Activated T-helper 1 cell treated with anti-CD3 and anti-CD28 coated beads, Interleukin-12 subunit alpha, Interleukin-12 subunit beta, Interleukin-2, Interleukin-4 antibody, amounts not matched to agents 30 ng/mL and 10 ng/mL and 1 ng/mL, durations not matched to agents 14 hours and 24 hours and 36 hours (primary cell): ENCODE measurements at regions of chr11 and their contacts with region 1.

Region 1: DNA sequence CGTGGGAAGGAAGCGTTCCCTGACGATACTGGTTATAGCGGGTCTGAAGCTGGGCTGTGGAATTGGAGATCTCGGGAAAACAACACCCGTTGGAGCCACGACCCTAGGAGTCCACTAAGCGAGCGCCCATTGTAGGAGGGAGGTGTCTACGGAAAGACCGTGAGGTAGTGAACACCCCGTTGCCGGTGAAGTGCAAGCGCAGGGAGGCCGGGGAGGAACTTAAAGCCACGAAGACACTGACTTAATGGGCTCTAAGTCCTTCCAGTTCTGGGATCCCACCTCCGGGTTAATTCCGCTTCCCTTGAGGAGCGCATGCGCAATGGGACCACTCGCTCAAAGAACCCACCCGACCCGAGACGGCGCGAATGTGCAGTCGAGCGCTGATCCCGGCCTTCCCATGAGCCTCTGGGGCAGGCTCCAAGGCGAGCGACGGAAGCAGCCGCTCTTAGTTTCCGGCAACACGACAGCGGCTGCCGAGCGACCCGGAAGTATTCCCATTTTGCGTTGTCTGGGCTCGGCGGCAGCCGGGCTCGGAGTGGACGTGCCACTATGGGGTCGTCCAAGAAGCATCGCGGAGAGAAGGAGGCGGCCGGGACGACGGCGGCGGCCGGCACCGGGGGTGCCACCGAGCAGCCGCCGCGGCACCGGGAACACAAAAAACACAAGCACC is at the start of gene SART1:
- DNase-seq: peak; percentile 94
- H3K4me3 Mint-ChIP-seq: peak within 1 kb of the TSS; percentile 98
- H3K27ac Mint-ChIP-seq: peak within 1 kb of the TSS; percentile 99
- H3K4me1 Mint-ChIP-seq: peaks cover 41% of the 10 kb centered on the region
- H3K27me3 Mint-ChIP-seq: no peaks in the 10 kb centered on the region
- total RNA-seq, gene SART1: 110 TPM in 2 replicates

Region 2: GRCh38 chr11:65900125-65900898 is 61.1 kb before region 1 on chr11 and contains the start of gene FOSL1:
- intact Hi-C with region 1: loop called (anchors 1 kb)
- DNase-seq: peak; percentile 89
- H3K4me3 Mint-ChIP-seq: peak within 1 kb of the TSS; percentile 82
- H3K27ac Mint-ChIP-seq: peak within 1 kb of the TSS; percentile 67
- H3K4me1 Mint-ChIP-seq: peaks cover 23% of the 10 kb centered on the region
- H3K27me3 Mint-ChIP-seq: peaks cover 9% of the 10 kb centered on the region
- total RNA-seq, gene FOSL1: 31.7 and 33.5 TPM in 2 replicates

Region 3: DNA sequence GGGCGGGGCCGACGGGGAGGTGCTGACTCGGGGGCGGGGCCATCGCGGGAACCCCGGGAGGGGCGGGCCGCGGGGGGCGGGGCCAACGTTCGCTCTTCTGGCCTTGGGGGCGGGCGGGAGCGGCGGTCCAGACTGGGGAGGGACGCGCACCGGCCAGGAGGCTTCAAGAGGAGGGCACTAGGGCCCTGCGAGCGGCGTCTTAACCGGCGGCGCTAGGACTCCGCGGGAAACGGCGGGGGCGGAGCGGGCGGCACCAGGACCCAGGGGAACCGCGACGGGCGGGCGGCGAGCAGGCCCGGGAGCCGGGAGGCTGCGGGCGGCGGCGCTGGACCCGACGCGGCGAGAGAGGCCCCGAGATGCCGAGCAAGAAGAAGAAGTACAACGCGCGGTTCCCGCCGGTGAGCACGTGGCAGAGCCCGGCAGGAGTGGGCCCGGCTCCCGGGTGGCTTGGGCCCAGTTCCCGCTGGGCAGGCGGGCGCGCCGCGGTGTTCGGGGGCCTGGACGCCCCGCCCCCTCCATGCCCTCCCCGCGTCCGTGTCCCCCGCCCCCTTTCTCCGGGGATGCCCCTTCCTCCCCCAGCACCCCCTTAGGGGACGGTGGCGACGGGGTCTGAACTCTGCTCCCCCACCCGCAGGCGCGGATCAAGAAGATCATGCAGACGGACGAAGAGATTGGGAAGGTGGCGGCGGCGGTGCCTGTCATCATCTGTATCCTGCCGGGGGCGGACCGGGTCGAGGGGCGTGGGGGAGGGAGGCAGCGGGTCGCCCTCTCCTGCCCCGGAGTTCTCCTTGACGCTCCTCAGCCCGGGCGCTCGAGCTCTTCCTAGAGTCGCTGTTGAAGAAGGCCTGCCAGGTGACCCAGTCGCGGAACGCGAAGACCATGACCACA is 42.0 kb before region 1 on chr11 and contains the start of gene DRAP1:
- intact Hi-C with region 1: loop called (anchors 1 kb)
- DNase-seq: peak; percentile 97
- H3K4me3 Mint-ChIP-seq: peak within 1 kb of the TSS; percentile 94
- H3K27ac Mint-ChIP-seq: peak within 1 kb of the TSS; percentile 84
- H3K4me1 Mint-ChIP-seq: peaks cover 17% of the 10 kb centered on the region
- H3K27me3 Mint-ChIP-seq: no peaks in the 10 kb centered on the region
- total RNA-seq, gene DRAP1: 119 and 129 TPM in 2 replicates

Region 4: GRCh38 chr11:65927904-65928397 is 33.4 kb before region 1 on chr11:
- intact Hi-C with region 1: loop called (anchors 1 kb)
- DNase-seq: peak; percentile 72
- H3K4me3 Mint-ChIP-seq: peak overlapping the region; percentile 48
- H3K27ac Mint-ChIP-seq: peak overlapping the region; percentile 92
- H3K4me1 Mint-ChIP-seq: peaks cover 40% of the 10 kb centered on the region
- H3K27me3 Mint-ChIP-seq: peaks cover under 1% of the 10 kb centered on the region